PC-9 (cell line): ENCODE measurements at regions of chr17 and their contacts with region 1.

Region 1: GRCh38 chr17:50919321-50920085 is 53.3 kb upstream of the TOB1 start:
- DNase-seq: peak; percentile 95
- H3K4me3 ChIP-seq: no peak overlapping the region; the same call in 1 of the 2 replicates
- H3K27ac ChIP-seq: peak overlapping the region; percentile 63
- H3K4me1 ChIP-seq: peaks cover 93% of the 10 kb centered on the region
- H3K27me3 ChIP-seq: no peaks in the 10 kb centered on the region
- CTCF ChIP-seq: no peak

Region 2: GRCh38 chr17:50904521-50905459 is 14.7 kb before region 1 on chr17:
- CTCF ChIA-PET with region 1: interaction called, 4 read pairs
- POLR2A ChIA-PET with region 1: interaction called, 19 read pairs
- intact Hi-C with region 1: loop called (anchors 2 kb)
- DNase-seq: peak; percentile 83 to 95
- H3K4me3 ChIP-seq: peak overlapping the region; percentile 42; the same call in 1 of the 2 replicates
- H3K27ac ChIP-seq: peak overlapping the region; percentile 87
- H3K4me1 ChIP-seq: peaks cover 60% of the 10 kb centered on the region
- H3K27me3 ChIP-seq: no peaks in the 10 kb centered on the region
- CTCF ChIP-seq: peak; percentile 48

Region 3: GRCh38 chr17:50944054-50944901 is 24.8 kb after region 1 on chr17:
- CTCF ChIA-PET with region 1: interaction called, 3 read pairs
- POLR2A ChIA-PET with region 1: interaction called, 18 read pairs
- intact Hi-C with region 1: loop called (anchors 2 kb)
- DNase-seq: peak; percentile 84 to 86
- H3K4me3 ChIP-seq: peak overlapping the region; percentile 60
- H3K27ac ChIP-seq: peak overlapping the region; percentile 9; the same call in 1 of the 2 replicates
- H3K4me1 ChIP-seq: peaks cover 54% of the 10 kb centered on the region
- H3K27me3 ChIP-seq: no peaks in the 10 kb centered on the region
- CTCF ChIP-seq: no peak